Activated CD4-positive, alpha-beta memory T cell treated with anti-CD3 and anti-CD28 coated beads, Interleukin-2, amount 10 ng/mL, durations not matched to agents 7 days and 5 days (primary cell): ENCODE measurements at regions of chr7 and their contacts with region 1.

Region 1: DNA sequence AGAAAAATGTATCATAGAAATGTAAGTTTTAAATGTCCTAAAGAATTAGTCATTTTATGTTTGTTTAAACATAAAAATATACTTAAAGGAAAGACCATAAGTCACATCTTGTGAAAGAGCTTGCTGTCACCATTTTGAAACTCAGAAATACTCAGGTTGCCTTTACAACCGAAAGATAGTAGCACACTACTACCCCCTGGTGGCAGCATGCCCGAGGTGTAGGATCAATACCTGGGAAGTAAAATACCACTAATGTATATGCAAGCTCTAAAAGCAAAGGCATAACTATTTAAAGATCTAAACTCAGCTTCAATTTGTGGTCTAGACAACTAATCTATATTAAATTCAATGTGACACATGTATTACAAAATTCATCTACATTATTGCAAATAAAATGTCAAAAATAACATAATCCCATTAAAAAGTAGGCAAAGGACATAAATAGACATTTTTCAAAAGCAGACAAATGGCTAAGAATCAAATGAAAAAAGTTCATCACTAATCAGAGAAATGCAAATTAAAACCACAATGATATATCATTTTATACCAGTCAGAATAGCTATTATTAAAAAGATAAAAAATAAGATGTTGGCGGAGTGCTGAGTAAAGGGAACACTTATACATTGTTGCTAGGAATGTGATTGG is 47.7 kb upstream of the FGL2 start:
- DNase-seq: peak; percentile 90
- H3K4me3 Mint-ChIP-seq: no peak overlapping the region
- H3K27ac Mint-ChIP-seq: no peak overlapping the region
- H3K4me1 Mint-ChIP-seq: peaks cover 5% of the 10 kb centered on the region
- H3K27me3 Mint-ChIP-seq: peaks cover 7% of the 10 kb centered on the region

Region 2: DNA sequence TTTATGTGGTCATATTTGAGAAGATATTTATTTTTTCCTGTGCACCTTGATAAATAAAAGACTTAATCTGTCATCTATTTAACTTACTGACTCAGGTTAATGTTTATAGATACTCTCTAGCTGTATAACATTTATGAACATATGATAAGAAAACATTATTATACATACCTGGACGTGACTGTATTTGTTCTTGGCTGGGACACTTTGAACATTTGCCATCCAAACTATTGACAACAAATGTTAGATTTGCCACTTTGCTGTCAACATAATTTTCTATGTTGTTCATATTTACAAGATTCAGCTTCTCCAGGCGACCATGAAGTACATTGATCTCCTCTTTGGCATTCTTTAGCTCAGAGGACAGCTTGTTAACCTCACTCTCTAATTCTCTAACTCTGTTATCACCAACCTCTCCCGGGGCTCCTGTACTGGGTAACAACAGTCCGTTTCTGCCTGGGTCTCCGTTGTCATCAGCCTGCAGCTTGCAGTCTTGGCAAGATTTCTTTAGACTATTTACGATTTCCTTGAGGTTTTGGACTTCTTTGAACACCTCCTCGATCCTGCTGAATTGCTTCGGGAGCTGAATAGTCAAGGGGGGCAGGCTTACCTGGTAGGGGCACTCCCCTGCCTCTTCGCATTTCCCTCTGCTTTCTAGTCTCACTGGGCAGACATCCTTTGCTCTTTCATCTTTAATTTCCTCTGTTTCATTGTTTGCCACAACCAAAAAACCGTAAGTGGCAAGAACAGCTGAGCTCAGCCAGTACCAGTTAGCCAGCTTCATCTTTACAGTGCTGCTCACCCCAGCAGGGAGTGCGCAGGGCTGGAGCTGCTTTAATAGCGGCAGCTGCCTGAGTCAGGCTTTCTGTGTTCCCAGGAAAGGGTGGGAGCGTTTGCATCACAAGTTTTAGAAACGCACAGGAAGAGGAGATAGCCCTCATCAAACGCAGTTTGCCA is 48.0 kb before region 1 on chr7 and contains the start of gene FGL2:
- CTCF ChIA-PET with region 1: interaction called, 13 read pairs
- POLR2A ChIA-PET with region 1: interaction called, 8 read pairs
- DNase-seq: peak; percentile 44
- H3K4me3 Mint-ChIP-seq: peak within 1 kb of the TSS; percentile 78
- H3K27ac Mint-ChIP-seq: peak within 1 kb of the TSS; percentile 61
- H3K4me1 Mint-ChIP-seq: peaks cover 46% of the 10 kb centered on the region
- H3K27me3 Mint-ChIP-seq: no peaks in the 10 kb centered on the region
- total RNA-seq, gene FGL2: 4.1 to 4.2 TPM

Region 3: GRCh38 chr7:77331938-77332695 is 84.8 kb after region 1 on chr7:
- CTCF ChIA-PET with region 1: interaction called, 57 read pairs
- POLR2A ChIA-PET with region 1: interaction called, 6 read pairs
- DNase-seq: peak; percentile 58
- H3K4me3 Mint-ChIP-seq: no peak overlapping the region
- H3K27ac Mint-ChIP-seq: peak overlapping the region; percentile 27
- H3K4me1 Mint-ChIP-seq: peaks cover 48% of the 10 kb centered on the region
- H3K27me3 Mint-ChIP-seq: no peaks in the 10 kb centered on the region

Region 4: DNA sequence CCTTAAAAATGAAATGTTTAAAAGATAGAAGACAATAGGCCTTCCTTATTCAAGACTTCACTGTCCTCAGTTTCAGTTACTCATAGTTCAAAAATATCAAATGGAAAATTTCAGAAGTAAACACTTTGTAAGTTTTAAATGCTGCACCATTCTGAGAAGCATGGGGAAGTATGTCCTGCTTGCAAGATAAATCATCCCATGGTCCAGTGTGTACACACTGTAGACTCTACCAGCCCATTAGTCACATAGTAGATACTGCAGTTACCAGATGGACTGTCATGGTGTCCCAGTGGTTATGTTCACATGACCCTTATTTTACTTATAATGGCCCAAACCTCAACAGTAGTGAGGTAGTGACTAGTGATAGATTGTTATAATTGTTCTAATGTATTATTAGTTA is 359.2 kb after region 1 on chr7:
- CTCF ChIA-PET with region 1: no interaction called
- POLR2A ChIA-PET with region 1: no interaction called
- DNase-seq: no peak
- H3K4me3 Mint-ChIP-seq: no peak overlapping the region
- H3K27ac Mint-ChIP-seq: no peak overlapping the region
- H3K4me1 Mint-ChIP-seq: no peaks in the 10 kb centered on the region
- H3K27me3 Mint-ChIP-seq: no peaks in the 10 kb centered on the region